ENCODE measurements at regions of chr6 and their contacts with region 1.

Region 1: DNA sequence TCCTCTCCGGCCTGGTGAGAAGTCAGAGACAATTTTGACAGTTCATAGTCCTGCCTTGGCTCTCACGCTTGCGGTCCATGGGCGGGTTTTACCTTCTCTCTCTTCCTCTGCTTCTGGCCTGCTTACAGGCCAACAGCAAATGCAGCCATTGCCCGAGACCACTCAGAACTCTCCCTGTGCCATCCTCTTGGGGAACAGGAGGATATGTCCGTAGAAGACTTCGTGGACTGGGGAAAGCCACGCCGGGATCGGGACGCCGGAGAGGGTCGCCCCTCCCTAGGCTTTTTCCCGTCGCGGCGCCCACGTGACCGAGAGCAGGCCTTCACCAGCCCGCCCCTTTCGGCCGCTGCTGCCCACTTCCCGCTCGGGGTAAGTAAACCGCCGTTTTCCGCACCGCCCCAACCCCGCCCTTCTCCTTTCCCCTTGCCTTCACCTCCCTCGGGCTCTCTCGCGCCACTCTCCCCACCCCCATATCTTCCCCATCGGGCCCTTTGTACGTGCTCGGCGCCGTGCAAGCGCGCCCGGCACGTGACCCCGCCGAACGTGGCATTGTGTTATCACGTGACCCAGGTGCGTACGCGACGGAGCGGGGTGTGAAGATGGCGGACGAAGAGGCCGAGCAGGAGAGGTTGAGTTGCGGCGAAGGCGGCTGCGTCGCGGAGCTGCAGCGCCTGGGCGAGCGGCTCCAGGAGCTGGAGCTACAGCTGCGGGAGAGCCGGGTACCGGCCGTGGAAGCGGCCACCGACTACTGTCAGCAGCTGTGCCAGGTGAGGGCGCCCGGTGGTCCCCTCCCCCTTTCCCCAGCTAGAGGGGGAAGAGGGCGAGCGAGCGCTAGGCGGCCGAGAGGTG is at the start of gene ZNF292:
- DNase-seq: peak; percentile 98
- total RNA-seq, gene ZNF292: 34.5 TPM

Region 2: DNA sequence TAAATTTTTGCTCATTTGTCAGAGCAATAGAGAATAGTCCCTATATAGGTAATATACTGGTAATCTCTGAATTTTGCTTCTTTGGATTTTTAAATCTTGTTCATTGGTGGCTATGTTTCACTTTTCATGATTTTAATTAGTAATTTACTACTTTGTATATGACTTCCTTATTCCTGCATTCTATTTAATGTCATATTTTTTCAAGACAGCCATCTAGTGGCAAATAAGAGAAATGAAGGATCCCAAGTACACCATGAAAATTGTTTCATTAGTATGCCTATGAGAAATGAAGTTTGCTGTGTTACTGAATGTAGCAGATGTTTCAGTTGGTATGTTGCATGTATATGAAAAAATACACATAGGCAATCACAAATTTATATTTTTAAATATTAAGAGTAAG is 82.6 kb after region 1 on chr6:
- intact Hi-C with region 1: loop called (anchors 5 kb)
- DNase-seq: no peak

Region 3: DNA sequence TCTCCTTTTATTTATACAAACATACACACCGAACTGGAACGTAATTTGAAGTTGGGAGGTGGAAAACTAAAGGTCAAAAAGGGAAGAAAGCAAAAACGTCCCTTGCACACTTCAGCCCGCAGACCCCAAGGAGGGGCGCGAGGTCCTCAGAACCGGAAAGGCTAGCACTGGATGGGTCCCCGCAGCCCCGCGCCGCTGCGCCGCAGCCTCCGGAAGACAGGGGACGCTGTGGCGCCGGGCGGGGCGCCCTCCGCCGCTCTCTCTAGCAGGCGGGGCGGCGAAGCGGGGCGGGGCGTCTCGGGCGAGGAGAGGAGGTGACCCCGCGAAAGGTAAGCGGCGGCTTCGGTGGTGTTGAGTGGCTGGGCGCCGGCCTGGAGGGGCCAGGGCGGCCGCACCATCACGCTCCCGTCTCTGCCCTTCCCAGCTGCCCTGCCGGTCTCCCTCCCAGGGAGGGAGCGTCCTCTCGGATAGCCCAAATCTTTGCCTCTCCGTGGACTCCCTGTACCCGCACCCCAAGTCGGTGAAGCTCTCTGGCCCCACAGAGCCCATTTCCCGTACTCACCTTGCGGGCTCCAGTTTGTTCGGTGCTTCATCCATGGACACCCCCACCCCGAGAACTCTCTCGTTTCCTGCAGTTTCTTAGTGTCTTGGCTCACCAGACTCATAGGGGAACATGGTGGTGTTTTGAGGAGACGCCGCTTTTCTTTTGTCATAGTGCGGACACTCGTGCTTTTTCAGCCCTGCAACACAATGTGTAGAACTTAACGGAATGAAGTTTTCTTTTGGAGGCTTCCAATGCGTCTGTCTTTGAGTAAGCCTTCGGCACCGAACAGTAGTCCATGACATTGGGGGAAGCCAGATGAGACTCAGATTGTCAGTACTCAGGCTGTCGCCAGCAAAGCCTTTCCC is 167.3 kb after region 1 on chr6 and contains the start of gene SMIM8:
- intact Hi-C with region 1: loop called (anchors 5 kb)
- DNase-seq: peak; percentile 95
- total RNA-seq, gene SMIM8: 17.2 TPM

Measured in cardiac septum (tissue), 1 donor.